ENCODE measurements at regions of chr16 and their contacts with region 1.

Region 1: DNA sequence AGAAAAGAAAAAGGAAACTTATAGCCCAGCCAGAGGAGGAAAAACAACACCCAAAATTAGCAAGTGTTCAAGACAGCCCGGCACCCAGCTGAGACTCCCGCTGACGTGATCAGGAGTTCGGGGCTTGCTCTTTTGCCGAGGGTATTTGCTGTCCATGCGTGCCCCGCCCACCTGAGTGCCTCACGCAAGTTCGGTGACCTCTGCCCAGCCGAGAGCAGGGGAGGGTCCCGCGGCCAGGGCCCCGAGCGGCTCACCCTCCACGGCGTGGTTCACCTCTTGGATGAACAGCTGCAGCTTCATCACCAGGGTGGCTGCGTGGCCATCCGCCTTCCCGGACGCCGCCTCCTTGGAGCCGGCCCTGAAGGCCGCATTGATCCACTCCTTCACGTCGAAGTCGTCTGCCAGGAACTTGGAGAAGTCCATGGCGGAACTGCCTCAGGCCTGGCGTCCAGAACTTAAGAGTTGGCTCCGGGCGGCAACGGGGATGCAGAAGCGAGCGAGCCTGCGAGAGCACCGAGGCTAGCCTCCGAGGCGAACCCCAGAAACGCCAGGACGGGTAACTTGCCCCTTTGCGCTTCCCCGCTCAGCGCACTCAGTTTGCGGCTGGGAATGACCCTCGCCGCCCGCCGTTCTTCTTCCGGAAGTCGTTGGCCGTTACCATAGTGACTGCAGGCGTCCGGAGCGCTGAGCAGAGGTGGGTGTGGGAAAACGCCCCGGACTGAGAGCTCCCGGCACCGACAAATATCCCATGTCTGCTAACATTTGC is at the start of gene COG7:
- DNase-seq: peak; percentile 92
- ATAC-seq: peak; percentile 90
- H3K4me3 ChIP-seq: peak within 1 kb of the TSS; percentile 67 to 99 (median 89)
- H3K4me3 Mint-ChIP-seq: peak within 1 kb of the TSS; percentile 91
- H3K27ac ChIP-seq: peak within 1 kb of the TSS in 1 of 2 donors; percentile 67
- H3K27ac Mint-ChIP-seq: peak within 1 kb of the TSS; percentile 90
- H3K4me1 ChIP-seq: peaks cover 11 to 13% of the 10 kb centered on the region in 2 donors
- H3K4me1 Mint-ChIP-seq: peaks cover 24% of the 10 kb centered on the region
- H3K27me3 ChIP-seq: no peaks in the 10 kb centered on the region
- H3K27me3 Mint-ChIP-seq: no peaks in the 10 kb centered on the region
- CTCF ChIP-seq: no peak
- total RNA-seq, gene COG7: 21.3 and 23.3 TPM in 2 replicates

Region 2: DNA sequence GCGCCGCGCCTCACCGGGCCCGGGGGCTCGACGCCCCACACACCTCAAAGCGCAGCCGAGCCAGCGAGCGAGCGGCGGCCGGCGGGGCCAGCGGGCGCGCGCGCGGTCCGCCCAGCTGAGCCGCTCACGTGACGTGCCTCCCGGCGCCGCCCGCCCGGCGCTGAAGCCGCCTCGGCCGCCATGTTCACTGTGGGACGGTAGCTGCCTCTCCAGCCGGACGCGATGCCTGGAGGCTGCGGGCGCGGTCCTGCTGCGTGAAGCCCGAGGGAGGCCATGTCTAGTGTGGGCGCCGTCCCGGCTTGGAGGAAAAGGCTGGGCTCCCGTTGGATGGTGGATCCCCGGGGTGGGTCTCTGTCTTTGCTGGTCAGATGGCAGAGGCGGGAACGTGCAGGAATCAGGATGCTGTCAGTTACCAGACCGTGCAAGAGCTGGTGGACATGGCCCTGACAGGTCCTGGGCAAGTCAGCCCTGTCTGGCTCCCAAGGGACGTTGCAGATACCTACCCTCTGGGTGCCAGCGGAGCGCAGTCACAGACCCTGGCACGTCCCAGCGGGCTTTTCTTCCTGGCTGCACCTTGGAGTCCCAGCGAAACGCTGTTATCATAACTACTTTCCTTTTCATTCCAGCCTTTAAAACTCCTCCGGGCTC is 303.3 kb before region 1 on chr16 and contains the start of gene USP31:
- CTCF ChIA-PET with region 1: no interaction called
- POLR2A ChIA-PET with region 1: no interaction called
- intact Hi-C with region 1: no loop called
- DNase-seq: peak; percentile 92
- ATAC-seq: peak; percentile 96
- H3K4me3 ChIP-seq: peak within 1 kb of the TSS; percentile 44 to 90 (median 71)
- H3K4me3 Mint-ChIP-seq: peak within 1 kb of the TSS; percentile 96
- H3K27ac ChIP-seq: peak within 1 kb of the TSS in 1 of 2 donors; percentile 28
- H3K27ac Mint-ChIP-seq: peak within 1 kb of the TSS; percentile 84
- H3K4me1 ChIP-seq: peaks cover 8 to 9% of the 10 kb centered on the region in 2 donors
- H3K4me1 Mint-ChIP-seq: peaks cover 14% of the 10 kb centered on the region
- H3K27me3 ChIP-seq: peaks cover 0 to 6% (median 0%) of the 10 kb centered on the region in 4 experiments
- H3K27me3 Mint-ChIP-seq: peaks cover 5% of the 10 kb centered on the region
- CTCF ChIP-seq: no peak
- total RNA-seq, gene USP31: 5.6 and 6.7 TPM in 2 replicates

Region 3: GRCh38 chr16:23223368-23223767 is 229.4 kb before region 1 on chr16:
- CTCF ChIA-PET with region 1: no interaction called
- POLR2A ChIA-PET with region 1: no interaction called
- intact Hi-C with region 1: no loop called
- DNase-seq: no peak
- ATAC-seq: no peak
- H3K4me3 ChIP-seq: no peak overlapping the region
- H3K4me3 Mint-ChIP-seq: no peak overlapping the region
- H3K27ac ChIP-seq: no peak overlapping the region
- H3K27ac Mint-ChIP-seq: no peak overlapping the region
- H3K4me1 ChIP-seq: no peaks in the 10 kb centered on the region
- H3K4me1 Mint-ChIP-seq: no peaks in the 10 kb centered on the region
- H3K27me3 ChIP-seq: peaks cover 0 to 3% (median 0%) of the 10 kb centered on the region in 4 experiments
- H3K27me3 Mint-ChIP-seq: peaks cover 24% of the 10 kb centered on the region
- CTCF ChIP-seq: no peak

Region 4: DNA sequence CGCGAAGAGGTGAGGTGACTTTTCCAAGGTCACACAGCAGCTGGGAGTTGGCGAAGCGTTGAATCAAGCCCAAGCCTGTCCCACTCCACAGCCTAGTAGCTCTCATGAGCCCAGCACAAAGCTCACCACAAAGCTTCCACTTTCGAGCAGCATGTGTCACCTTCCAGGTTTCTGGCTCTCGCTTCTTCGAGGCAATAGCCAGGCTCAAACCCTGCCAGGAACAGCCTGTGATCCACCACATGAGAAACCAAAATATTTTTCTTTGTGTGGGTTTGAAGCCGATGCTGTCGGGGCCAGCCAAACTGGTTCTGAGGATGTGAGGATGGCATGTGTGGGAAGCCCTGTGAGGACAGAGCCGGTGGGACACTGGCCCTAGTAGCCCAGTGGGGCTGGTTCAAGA is 67.9 kb before region 1 on chr16:
- CTCF ChIA-PET with region 1: no interaction called
- POLR2A ChIA-PET with region 1: no interaction called
- intact Hi-C with region 1: no loop called
- DNase-seq: no peak
- ATAC-seq: no peak
- H3K4me3 ChIP-seq: no peak overlapping the region
- H3K4me3 Mint-ChIP-seq: no peak overlapping the region
- H3K27ac ChIP-seq: no peak overlapping the region
- H3K27ac Mint-ChIP-seq: no peak overlapping the region
- H3K4me1 ChIP-seq: no peaks in the 10 kb centered on the region
- H3K4me1 Mint-ChIP-seq: no peaks in the 10 kb centered on the region
- H3K27me3 ChIP-seq: no peaks in the 10 kb centered on the region
- H3K27me3 Mint-ChIP-seq: no peaks in the 10 kb centered on the region
- CTCF ChIP-seq: no peak

Region 5: GRCh38 chr16:23504451-23505179 is 51.9 kb after region 1 on chr16:
- CTCF ChIA-PET with region 1: no interaction called
- POLR2A ChIA-PET with region 1: no interaction called
- intact Hi-C with region 1: loop called (anchors 2 kb)
- DNase-seq: peak; percentile 66
- ATAC-seq: peak; percentile 56
- H3K4me3 ChIP-seq: peak overlapping the region in 4 of 5 experiments; percentile 1 to 91 (median 78)
- H3K4me3 Mint-ChIP-seq: peak overlapping the region; percentile 94
- H3K27ac ChIP-seq: peak overlapping the region; percentile 86 to 91
- H3K27ac Mint-ChIP-seq: peak overlapping the region; percentile 90
- H3K4me1 ChIP-seq: peaks cover 85 to 94% of the 10 kb centered on the region in 2 donors
- H3K4me1 Mint-ChIP-seq: peaks cover 87% of the 10 kb centered on the region
- H3K27me3 ChIP-seq: no peaks in the 10 kb centered on the region
- H3K27me3 Mint-ChIP-seq: no peaks in the 10 kb centered on the region
- CTCF ChIP-seq: no peak

Region 6: GRCh38 chr16:23640931-23641765 is 188.4 kb after region 1 on chr16 and contains the starts of genes DCTN5 and PALB2:
- CTCF ChIA-PET with region 1: no interaction called
- POLR2A ChIA-PET with region 1: no interaction called
- intact Hi-C with region 1: loop called (anchors 1 kb)
- DNase-seq: peak; percentile 91
- ATAC-seq: peak; percentile 95
- H3K4me3 ChIP-seq: peak within 1 kb of the TSS; percentile 89 to 100 (median 96)
- H3K4me3 Mint-ChIP-seq: peak within 1 kb of the TSS; percentile 99
- H3K27ac ChIP-seq: peak within 1 kb of the TSS; percentile 80 to 84
- H3K27ac Mint-ChIP-seq: peak within 1 kb of the TSS; percentile 98
- H3K4me1 ChIP-seq: peaks cover 13 to 20% of the 10 kb centered on the region in 2 donors
- H3K4me1 Mint-ChIP-seq: peaks cover 36% of the 10 kb centered on the region
- H3K27me3 ChIP-seq: no peaks in the 10 kb centered on the region
- H3K27me3 Mint-ChIP-seq: no peaks in the 10 kb centered on the region
- CTCF ChIP-seq: no peak
- total RNA-seq, gene DCTN5: 58.3 and 62.3 TPM in 2 replicates
- total RNA-seq, gene PALB2: 14.9 and 16.3 TPM in 2 replicates